Activated CD4-positive, alpha-beta memory T cell treated with anti-CD3 and anti-CD28 coated beads for 36 hours (primary cell): ENCODE measurements at regions of chr18 and their contacts with region 1.

Region 1: GRCh38 chr18:63936156-63936931 is 12.8 kb upstream of the HMSD start:
- DNase-seq: peak; percentile 82
- H3K4me3 Mint-ChIP-seq: peak overlapping the region; percentile 67
- H3K27ac Mint-ChIP-seq: no peak overlapping the region
- H3K4me1 Mint-ChIP-seq: no peaks in the 10 kb centered on the region
- H3K27me3 Mint-ChIP-seq: peaks cover 8% of the 10 kb centered on the region

Region 2: GRCh38 chr18:63823518-63824219 is 112.7 kb before region 1 on chr18:
- CTCF ChIA-PET with region 1: interaction called, 24 read pairs
- POLR2A ChIA-PET with region 1: no interaction called
- intact Hi-C with region 1: loop called (anchors 1 kb)
- DNase-seq: peak; percentile 53
- H3K4me3 Mint-ChIP-seq: no peak overlapping the region
- H3K27ac Mint-ChIP-seq: no peak overlapping the region
- H3K4me1 Mint-ChIP-seq: no peaks in the 10 kb centered on the region
- H3K27me3 Mint-ChIP-seq: peaks cover 3% of the 10 kb centered on the region

Region 3: GRCh38 chr18:63922049-63922448 is 14.3 kb before region 1 on chr18:
- CTCF ChIA-PET with region 1: interaction called, 11 read pairs
- POLR2A ChIA-PET with region 1: no interaction called
- intact Hi-C with region 1: no loop called
- DNase-seq: no peak
- H3K4me3 Mint-ChIP-seq: no peak overlapping the region
- H3K27ac Mint-ChIP-seq: no peak overlapping the region
- H3K4me1 Mint-ChIP-seq: no peaks in the 10 kb centered on the region
- H3K27me3 Mint-ChIP-seq: peaks cover 25% of the 10 kb centered on the region

Region 4: GRCh38 chr18:63963615-63964256 is 27.4 kb after region 1 on chr18:
- CTCF ChIA-PET with region 1: interaction called, 25 read pairs
- POLR2A ChIA-PET with region 1: no interaction called
- intact Hi-C with region 1: no loop called
- DNase-seq: peak; percentile 61
- H3K4me3 Mint-ChIP-seq: no peak overlapping the region
- H3K27ac Mint-ChIP-seq: no peak overlapping the region
- H3K4me1 Mint-ChIP-seq: peaks cover 14% of the 10 kb centered on the region
- H3K27me3 Mint-ChIP-seq: peaks cover 13% of the 10 kb centered on the region